CD4-positive, alpha-beta memory T cell (primary cell): ENCODE measurements at regions of chr11 and their contacts with region 1.

Region 1: DNA sequence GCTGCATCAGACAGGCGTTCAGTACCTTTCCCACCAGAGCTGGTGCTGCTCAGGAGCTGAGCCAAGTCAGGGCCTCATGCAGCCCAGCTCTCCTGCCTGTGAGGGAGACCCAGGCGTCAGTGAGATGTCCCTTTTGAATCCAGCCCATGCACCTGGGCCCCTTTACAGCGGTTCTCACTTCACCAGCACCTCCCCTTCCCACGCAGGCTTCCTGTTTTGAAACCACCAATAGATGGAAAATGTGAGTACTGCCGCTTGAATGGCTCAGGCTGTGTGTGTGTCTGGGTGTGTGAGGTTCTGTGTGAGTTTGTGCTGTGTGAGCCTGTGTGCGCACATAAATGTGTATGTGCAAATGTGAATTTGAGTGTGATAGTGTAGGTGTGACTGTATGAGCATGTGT is 88.4 kb downstream of the UBASH3B start:
- DNase-seq: peak; percentile 73 to 92 (median 78)
- H3K4me3 ChIP-seq: peak overlapping the region in 1 of 2 donors; percentile 41
- H3K4me3 Mint-ChIP-seq: no peak overlapping the region
- H3K27ac ChIP-seq: peak overlapping the region; percentile 59
- H3K27ac Mint-ChIP-seq: no peak overlapping the region
- H3K4me1 ChIP-seq: peaks cover 74% of the 10 kb centered on the region
- H3K4me1 Mint-ChIP-seq: peaks cover 5 to 59% (median 29%) of the 10 kb centered on the region in 4 donors
- H3K27me3 ChIP-seq: no peaks in the 10 kb centered on the region
- H3K27me3 Mint-ChIP-seq: no peaks in the 10 kb centered on the region

Region 2: DNA sequence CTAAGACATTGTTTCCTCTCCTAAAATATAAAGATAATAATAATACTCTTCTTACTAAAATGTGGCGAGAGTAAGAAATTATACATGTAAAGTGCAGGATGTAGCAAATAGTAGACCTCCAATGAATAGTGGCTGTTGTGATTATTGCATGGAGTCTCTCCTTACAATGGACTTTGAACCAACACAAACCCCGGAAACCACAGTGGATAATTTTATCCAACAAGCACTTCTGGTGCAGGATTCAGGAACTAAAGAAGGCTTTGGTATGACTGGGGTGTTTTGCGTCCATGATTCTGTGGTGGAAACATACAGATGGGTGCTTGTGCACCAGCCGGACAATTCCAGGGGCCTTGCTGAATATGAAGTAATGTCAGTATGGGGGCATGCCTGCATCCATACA is 234.9 kb before region 1 on chr11:
- CTCF ChIA-PET with region 1: no interaction called
- POLR2A ChIA-PET with region 1: no interaction called
- intact Hi-C with region 1: no loop called
- DNase-seq: no peak
- H3K4me3 ChIP-seq: no peak overlapping the region
- H3K4me3 Mint-ChIP-seq: no peak overlapping the region
- H3K27ac ChIP-seq: no peak overlapping the region
- H3K27ac Mint-ChIP-seq: no peak overlapping the region
- H3K4me1 ChIP-seq: no peaks in the 10 kb centered on the region
- H3K4me1 Mint-ChIP-seq: no peaks in the 10 kb centered on the region
- H3K27me3 ChIP-seq: no peaks in the 10 kb centered on the region
- H3K27me3 Mint-ChIP-seq: peaks cover 20 to 21% of the 10 kb centered on the region in 2 donors

Region 3: GRCh38 chr11:122668562-122669090 is 75.3 kb before region 1 on chr11:
- CTCF ChIA-PET with region 1: interaction called, 440 read pairs
- POLR2A ChIA-PET with region 1: interaction called, 82 read pairs
- intact Hi-C with region 1: no loop called
- DNase-seq: peak in 4 of 5 donors; percentile 51 to 62 (median 54)
- H3K4me3 ChIP-seq: peak overlapping the region in 1 of 2 donors; percentile 24
- H3K4me3 Mint-ChIP-seq: peak overlapping the region; percentile 22 to 88 (median 68)
- H3K27ac ChIP-seq: peak overlapping the region; percentile 15
- H3K27ac Mint-ChIP-seq: peak overlapping the region; percentile 73 to 93 (median 88)
- H3K4me1 ChIP-seq: peaks cover 80% of the 10 kb centered on the region
- H3K4me1 Mint-ChIP-seq: peaks cover 49 to 84% (median 69%) of the 10 kb centered on the region in 4 donors
- H3K27me3 ChIP-seq: no peaks in the 10 kb centered on the region
- H3K27me3 Mint-ChIP-seq: no peaks in the 10 kb centered on the region

Region 4: DNA sequence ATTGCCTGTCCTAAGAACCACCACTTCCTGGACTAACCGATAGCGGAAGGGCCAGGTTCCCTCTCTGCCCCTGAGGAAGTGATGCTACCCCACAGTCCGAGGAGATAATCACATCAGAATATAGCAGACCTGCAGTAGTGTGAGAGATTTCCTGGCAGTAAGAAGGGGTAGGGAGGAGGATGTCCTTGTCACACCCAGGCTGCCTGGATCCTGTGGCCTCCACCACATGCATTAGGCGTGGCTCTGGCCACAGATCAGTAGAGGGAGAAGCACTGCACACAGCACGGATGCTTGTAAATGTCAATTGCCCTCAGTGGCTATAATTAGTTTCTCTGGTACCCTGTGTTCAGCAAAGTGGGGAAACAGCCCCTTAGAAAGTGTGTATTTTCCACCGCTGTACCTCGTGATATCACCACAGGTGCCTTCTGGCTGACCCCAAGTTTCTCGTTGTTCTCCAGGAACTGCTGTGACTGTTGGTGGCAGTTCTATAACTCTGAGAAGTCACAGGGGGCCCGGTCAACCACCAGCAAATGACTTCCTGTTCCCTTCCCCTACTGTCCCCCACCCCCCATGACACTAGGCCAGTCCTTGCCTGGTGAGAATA is 26.6 kb before region 1 on chr11:
- CTCF ChIA-PET with region 1: interaction called, 7 read pairs
- POLR2A ChIA-PET with region 1: interaction called, 12 read pairs
- intact Hi-C with region 1: no loop called
- DNase-seq: peak in 2 of 5 donors; percentile 8 to 19
- H3K4me3 ChIP-seq: no peak overlapping the region
- H3K4me3 Mint-ChIP-seq: peak overlapping the region in 5 of 8 donors; percentile 11 to 37 (median 24)
- H3K27ac ChIP-seq: no peak overlapping the region
- H3K27ac Mint-ChIP-seq: peak overlapping the region; percentile 74 to 92 (median 85)
- H3K4me1 ChIP-seq: peaks cover 41% of the 10 kb centered on the region
- H3K4me1 Mint-ChIP-seq: peaks cover 39 to 72% (median 57%) of the 10 kb centered on the region in 4 donors
- H3K27me3 ChIP-seq: no peaks in the 10 kb centered on the region
- H3K27me3 Mint-ChIP-seq: no peaks in the 10 kb centered on the region

Region 5: GRCh38 chr11:122727101-122727929 is 16.6 kb before region 1 on chr11:
- CTCF ChIA-PET with region 1: interaction called, 8 read pairs
- POLR2A ChIA-PET with region 1: interaction called, 64 read pairs
- intact Hi-C with region 1: loop called (anchors 2 kb)
- DNase-seq: peak in 4 of 5 donors; percentile 38 to 50 (median 47)
- H3K4me3 ChIP-seq: peak overlapping the region; percentile 9 to 38
- H3K4me3 Mint-ChIP-seq: peak overlapping the region; percentile 79 to 93 (median 88)
- H3K27ac ChIP-seq: peak overlapping the region; percentile 59
- H3K27ac Mint-ChIP-seq: peak overlapping the region; percentile 92 to 99 (median 95)
- H3K4me1 ChIP-seq: peaks cover 67% of the 10 kb centered on the region
- H3K4me1 Mint-ChIP-seq: peaks cover 51 to 66% (median 59%) of the 10 kb centered on the region in 4 donors
- H3K27me3 ChIP-seq: no peaks in the 10 kb centered on the region
- H3K27me3 Mint-ChIP-seq: no peaks in the 10 kb centered on the region

Region 6: DNA sequence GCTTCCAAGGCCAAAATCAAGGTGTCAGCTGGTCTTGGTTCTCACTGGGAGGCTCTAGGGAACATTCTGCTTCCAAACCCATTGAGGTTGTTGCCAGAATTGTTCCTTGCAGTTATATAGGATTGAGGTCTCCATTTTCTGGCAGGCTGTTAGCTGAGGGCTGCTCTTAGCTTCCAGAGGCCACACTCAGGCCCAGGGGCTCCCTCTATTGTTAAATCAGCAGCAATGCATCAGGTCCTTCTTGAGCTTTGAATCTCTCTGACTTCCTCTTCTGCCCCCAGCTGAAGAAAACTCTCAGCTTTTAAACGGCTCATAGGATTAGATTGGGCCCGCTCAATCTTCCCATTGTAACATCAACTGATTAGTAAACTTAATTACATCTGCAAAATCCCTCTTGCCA is 277.0 kb after region 1 on chr11:
- CTCF ChIA-PET with region 1: no interaction called
- POLR2A ChIA-PET with region 1: no interaction called
- intact Hi-C with region 1: no loop called
- DNase-seq: peak in 4 of 5 donors; percentile 21 to 34 (median 26)
- H3K4me3 ChIP-seq: no peak overlapping the region
- H3K4me3 Mint-ChIP-seq: no peak overlapping the region
- H3K27ac ChIP-seq: no peak overlapping the region
- H3K27ac Mint-ChIP-seq: no peak overlapping the region
- H3K4me1 ChIP-seq: peaks cover 8% of the 10 kb centered on the region
- H3K4me1 Mint-ChIP-seq: peaks cover 5 to 8% (median 8%) of the 10 kb centered on the region in 4 donors
- H3K27me3 ChIP-seq: no peaks in the 10 kb centered on the region
- H3K27me3 Mint-ChIP-seq: peaks cover 3 to 4% of the 10 kb centered on the region in 2 donors